IMR-90 (cell line): ENCODE measurements at regions of chr1 and their contacts with region 1.

Region 1: DNA sequence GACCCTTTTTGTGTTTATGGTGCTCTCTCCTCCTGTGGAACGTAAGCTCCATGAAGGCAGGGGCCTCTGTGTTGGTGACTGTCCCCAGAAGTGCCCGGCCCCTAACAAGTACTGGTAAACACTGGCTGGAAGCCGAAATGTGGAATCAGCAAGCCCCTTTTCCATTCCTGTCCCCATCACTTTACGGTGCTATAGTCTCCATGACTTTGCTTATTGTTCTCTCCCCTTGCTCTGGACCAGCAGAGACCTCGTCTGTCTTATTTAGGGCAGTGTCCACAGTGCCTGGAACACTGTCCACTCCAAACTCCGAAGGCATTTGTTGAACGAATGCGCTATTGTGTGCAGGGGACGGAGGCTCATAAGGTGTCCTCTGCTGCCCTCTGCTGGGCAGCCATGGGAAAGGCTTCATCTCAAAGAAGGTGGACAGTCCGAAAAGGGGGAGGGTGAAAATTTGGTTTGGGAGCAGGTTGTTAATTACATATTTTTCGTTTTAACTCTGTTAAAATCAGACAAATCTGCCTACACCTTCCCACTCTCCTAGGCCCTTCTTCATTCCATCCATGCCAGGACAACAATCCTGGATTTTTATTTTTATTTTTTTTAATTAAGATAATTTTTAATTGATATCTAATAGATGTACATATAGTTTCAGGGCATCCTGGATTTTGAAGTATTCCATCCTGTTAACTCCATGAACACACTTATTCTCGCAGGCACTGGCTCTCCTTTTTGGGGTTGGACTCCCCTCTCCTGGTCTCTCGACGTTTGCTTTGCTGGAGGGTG is 115.6 kb downstream of the PGBD5 start:
- DNase-seq: peak; percentile 68
- ATAC-seq: peak; percentile 98
- H3K4me3 ChIP-seq: no peak overlapping the region
- H3K27ac ChIP-seq: no peak overlapping the region
- H3K4me1 ChIP-seq: no peaks in the 10 kb centered on the region
- H3K27me3 ChIP-seq: peaks cover 2% of the 10 kb centered on the region
- CTCF ChIP-seq: peak; percentile 92
- POLR2A ChIP-seq: peak; percentile 44
- RAD21 ChIP-seq: peak; percentile 96

Region 2: DNA sequence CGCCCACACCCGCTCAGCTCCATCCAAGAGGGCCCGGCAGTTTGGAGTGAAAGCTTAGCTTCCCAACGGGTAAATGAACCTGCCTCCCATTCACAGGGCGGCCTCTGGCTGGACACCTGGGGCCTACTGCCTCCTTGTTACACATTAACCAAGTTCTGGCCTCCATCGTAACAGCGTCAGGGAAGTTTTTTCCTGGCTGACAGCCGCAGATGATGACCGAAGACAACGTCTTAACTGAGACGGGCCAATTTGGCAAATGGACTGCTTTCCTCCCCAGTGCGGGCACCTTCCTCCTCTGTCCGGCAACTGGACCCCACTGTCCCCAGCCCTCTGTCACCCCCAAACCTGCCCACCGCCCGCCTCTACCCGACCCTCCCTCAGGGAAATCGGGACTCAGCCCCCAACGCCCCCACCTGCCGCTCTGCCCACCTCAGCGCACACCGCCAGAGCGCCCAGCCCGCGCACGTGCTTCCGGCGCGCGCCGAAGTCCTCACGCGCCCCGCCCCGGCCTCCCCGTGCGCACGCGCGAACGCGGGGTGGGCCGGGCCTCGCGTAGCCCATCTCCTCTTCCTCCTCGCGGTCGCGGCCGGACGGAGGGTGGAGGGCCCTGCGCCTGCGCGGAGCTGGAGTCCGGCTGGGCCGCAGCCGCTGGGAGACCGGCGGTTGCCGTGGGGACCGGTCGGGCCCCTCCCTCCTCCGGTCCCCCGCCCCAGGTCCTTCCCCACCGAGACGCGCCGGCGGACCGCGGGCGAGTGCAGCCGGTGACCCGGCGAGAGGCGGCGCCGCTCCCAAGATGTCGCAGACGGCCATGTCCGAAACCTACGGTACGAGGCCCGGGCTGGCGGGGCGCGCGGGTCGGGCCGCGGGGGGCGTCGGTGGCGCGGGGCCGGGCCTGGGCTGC is 1039.8 kb before region 1 on chr1 and contains the start of gene RAB4A:
- CTCF ChIA-PET with region 1: no interaction called
- POLR2A ChIA-PET with region 1: no interaction called
- dilution Hi-C with region 1: no loop called
- in situ Hi-C with region 1: loop called (anchors 25 kb)
- intact Hi-C with region 1: no loop called
- DNase-seq: peak; percentile 81
- ATAC-seq: peak; percentile 96
- H3K4me3 ChIP-seq: peak within 1 kb of the TSS; percentile 87
- H3K27ac ChIP-seq: peak within 1 kb of the TSS; percentile 54
- H3K4me1 ChIP-seq: peaks cover 10% of the 10 kb centered on the region
- H3K27me3 ChIP-seq: no peaks in the 10 kb centered on the region
- CTCF ChIP-seq: no peak
- POLR2A ChIP-seq: peak; percentile 68; the same call in 1 of the 2 replicates
- RAD21 ChIP-seq: no peak
- total RNA-seq, gene RAB4A: 26.2 and 33.3 TPM in 2 replicates

Region 3: DNA sequence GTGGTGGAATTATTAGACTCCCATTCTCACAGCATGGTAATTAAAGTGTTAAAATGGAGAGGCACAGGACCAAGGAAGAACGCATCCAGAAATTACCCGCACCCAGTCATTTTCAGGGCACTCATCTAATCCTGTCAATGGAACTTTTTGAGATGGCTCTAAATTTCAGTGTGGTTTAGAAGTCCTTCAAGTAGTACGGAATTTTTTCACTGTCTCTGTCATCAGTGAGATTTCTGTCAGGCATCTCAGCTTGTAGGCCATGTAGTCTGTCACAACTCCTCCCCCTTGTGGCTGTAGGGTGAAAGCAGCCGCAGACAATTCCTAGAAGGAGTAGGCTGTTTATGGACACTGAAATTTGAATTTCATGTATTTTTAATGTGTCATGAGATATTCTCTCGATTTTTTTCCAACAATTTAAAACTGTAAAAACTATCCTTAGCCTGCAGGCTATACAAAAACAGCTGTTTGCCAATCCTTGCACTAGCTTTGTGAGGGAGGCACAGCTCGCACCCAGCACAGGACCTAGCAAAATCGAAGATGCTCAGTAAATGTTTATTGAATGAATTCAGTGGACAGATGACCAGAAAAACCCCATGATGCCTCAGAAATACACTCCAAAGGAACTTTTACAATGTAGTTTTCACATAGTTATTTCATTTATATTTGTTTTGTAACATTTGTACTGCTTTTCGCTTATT is 795.8 kb before region 1 on chr1:
- CTCF ChIA-PET with region 1: no interaction called
- POLR2A ChIA-PET with region 1: no interaction called
- dilution Hi-C with region 1: no loop called
- in situ Hi-C with region 1: no loop called
- intact Hi-C with region 1: loop called (anchors 1 kb)
- DNase-seq: peak; percentile 78
- ATAC-seq: peak; percentile 98
- H3K4me3 ChIP-seq: no peak overlapping the region
- H3K27ac ChIP-seq: no peak overlapping the region
- H3K4me1 ChIP-seq: no peaks in the 10 kb centered on the region; the same call in 1 of the 2 replicates
- H3K27me3 ChIP-seq: no peaks in the 10 kb centered on the region
- CTCF ChIP-seq: peak; percentile 82
- POLR2A ChIP-seq: no peak
- RAD21 ChIP-seq: peak; percentile 61

Region 4: DNA sequence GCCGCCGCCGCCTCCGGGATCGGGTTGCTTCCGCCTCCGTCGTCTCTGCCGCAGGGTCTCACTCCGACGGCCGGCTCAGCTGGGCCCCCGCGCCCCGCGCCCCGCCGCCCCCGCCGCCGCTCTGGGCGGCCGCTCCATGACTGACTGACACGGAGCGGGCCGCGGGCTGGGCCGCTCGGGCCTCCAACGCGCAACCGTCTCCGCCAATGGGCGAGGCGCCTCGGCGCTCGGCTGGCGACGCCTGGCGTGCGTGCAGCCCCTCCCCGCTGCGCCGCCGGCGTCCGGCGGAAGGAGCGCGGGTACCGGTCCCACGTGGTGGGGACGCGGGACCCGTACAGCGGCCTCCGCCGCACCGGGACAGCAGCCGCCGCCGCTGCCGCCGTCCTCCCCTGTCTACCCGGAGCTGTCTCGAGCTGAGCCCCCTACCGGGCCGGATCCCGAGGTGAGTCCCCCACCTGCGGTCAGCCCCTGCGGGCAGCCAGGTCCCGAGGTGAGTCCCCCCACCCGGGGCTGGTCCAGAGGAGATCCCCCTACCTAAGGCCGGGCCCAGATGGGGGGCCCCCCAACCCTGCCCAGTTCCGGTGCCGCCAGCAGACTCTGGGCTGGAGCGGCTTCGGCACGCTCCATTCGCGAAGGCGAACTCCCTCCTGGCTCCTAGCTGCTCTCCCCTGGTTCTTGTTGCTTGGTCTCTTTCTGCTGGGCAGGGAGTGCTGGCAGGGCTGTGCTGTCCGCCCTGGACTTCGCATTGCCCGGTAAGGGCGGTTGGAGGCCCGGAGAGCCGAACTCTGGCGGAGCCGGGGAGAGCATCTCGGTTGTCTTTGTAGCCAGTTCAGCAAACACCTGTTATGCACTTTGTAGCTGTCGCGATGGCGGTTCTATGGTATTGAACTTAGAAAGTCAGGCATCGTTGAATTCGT is 684.4 kb before region 1 on chr1 and contains the starts of genes TAF5L and URB2:
- CTCF ChIA-PET with region 1: no interaction called
- POLR2A ChIA-PET with region 1: no interaction called
- dilution Hi-C with region 1: no loop called
- in situ Hi-C with region 1: no loop called
- intact Hi-C with region 1: loop called (anchors 1 kb)
- DNase-seq: peak; percentile 89
- ATAC-seq: peak; percentile 95
- H3K4me3 ChIP-seq: peak within 1 kb of the TSS; percentile 84
- H3K27ac ChIP-seq: peak within 1 kb of the TSS; percentile 70
- H3K4me1 ChIP-seq: peaks cover 6% of the 10 kb centered on the region
- H3K27me3 ChIP-seq: no peaks in the 10 kb centered on the region
- CTCF ChIP-seq: no peak
- POLR2A ChIP-seq: peak; percentile 67; the same call in 1 of the 2 replicates
- RAD21 ChIP-seq: no peak
- total RNA-seq, gene TAF5L: 15.8 and 17.9 TPM in 2 replicates
- total RNA-seq, gene URB2: 12.8 and 15.4 TPM in 2 replicates

Region 5: GRCh38 chr1:229661022-229661877 is 649.3 kb before region 1 on chr1:
- CTCF ChIA-PET with region 1: interaction called, 3 read pairs
- POLR2A ChIA-PET with region 1: no interaction called
- dilution Hi-C with region 1: no loop called
- in situ Hi-C with region 1: loop called (anchors 10 kb)
- intact Hi-C with region 1: loop called (anchors 1 kb)
- DNase-seq: peak; percentile 65
- ATAC-seq: peak; percentile 92
- H3K4me3 ChIP-seq: no peak overlapping the region
- H3K27ac ChIP-seq: no peak overlapping the region
- H3K4me1 ChIP-seq: peaks cover 6% of the 10 kb centered on the region
- H3K27me3 ChIP-seq: no peaks in the 10 kb centered on the region
- CTCF ChIP-seq: peak; percentile 84
- POLR2A ChIP-seq: no peak
- RAD21 ChIP-seq: peak; percentile 85

Region 6: DNA sequence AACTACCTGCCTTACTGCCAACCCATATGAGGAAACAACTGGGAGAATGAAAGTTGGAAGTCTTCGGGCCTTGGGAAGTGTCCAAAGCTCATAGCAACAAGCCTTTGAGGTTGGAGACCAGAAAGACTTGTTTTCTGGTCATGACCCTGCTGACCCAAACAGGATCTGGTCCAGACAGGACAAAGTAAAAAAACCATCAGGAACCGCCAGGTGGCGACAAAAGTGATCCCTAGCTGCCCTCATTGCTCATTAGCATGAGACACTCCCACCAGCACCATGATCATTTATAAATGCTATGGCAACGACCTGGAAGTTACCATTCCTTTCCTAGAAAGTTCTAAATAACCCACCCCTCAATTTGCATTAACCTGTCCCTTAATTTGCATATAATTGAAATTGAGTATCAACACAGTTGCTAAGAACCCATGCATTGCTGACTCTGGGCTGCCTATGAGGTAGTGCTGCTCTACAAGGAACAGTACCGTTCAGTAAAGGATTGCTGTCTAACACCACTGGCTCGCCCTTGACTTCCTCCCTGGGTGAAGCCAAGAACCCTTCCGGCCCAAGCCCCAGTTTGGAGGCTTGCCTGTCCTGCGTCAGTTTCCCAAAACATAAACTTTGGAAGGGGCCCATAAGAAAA is 595.5 kb before region 1 on chr1:
- CTCF ChIA-PET with region 1: no interaction called
- POLR2A ChIA-PET with region 1: no interaction called
- dilution Hi-C with region 1: no loop called
- in situ Hi-C with region 1: no loop called
- intact Hi-C with region 1: loop called (anchors 2 kb)
- DNase-seq: peak; percentile 18
- ATAC-seq: no peak; the same call in 1 of the 2 replicates
- H3K4me3 ChIP-seq: no peak overlapping the region
- H3K27ac ChIP-seq: no peak overlapping the region
- H3K4me1 ChIP-seq: no peaks in the 10 kb centered on the region
- H3K27me3 ChIP-seq: no peaks in the 10 kb centered on the region; the same call in 1 of the 2 replicates
- CTCF ChIP-seq: peak; percentile 41
- POLR2A ChIP-seq: no peak
- RAD21 ChIP-seq: peak; percentile 37

Region 7: DNA sequence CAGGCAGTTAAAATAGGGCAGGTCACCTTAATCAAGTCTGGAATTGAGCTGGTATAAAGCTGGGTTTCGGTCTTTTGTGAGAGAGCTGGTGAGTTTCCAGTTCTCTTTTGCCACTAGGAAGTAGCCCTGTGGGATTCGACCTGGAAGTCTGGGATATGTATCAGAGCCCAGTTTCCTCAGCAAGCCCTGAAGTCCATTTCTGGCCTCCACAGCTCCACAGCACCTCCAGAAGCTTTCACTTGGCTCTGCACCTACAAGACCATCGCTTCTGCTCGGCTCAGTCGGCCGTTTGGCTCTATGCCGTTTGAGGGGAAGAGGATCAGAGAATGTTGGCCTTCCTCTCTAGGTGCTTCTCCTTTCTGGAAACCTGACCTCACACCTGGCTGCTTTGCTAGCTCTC is 95.5 kb before region 1 on chr1:
- CTCF ChIA-PET with region 1: no interaction called
- POLR2A ChIA-PET with region 1: no interaction called
- dilution Hi-C with region 1: no loop called
- in situ Hi-C with region 1: no loop called
- intact Hi-C with region 1: no loop called
- DNase-seq: peak; percentile 64
- ATAC-seq: peak; percentile 48
- H3K4me3 ChIP-seq: no peak overlapping the region
- H3K27ac ChIP-seq: no peak overlapping the region
- H3K4me1 ChIP-seq: peaks cover 9% of the 10 kb centered on the region
- H3K27me3 ChIP-seq: no peaks in the 10 kb centered on the region
- CTCF ChIP-seq: peak; percentile 51
- POLR2A ChIP-seq: no peak
- RAD21 ChIP-seq: peak; percentile 64

Region 8: GRCh38 chr1:230321741-230322432 is 11.3 kb after region 1 on chr1:
- CTCF ChIA-PET with region 1: no interaction called
- POLR2A ChIA-PET with region 1: no interaction called
- dilution Hi-C with region 1: no loop called
- in situ Hi-C with region 1: no loop called
- intact Hi-C with region 1: no loop called
- DNase-seq: no peak
- ATAC-seq: no peak
- H3K4me3 ChIP-seq: no peak overlapping the region
- H3K27ac ChIP-seq: no peak overlapping the region
- H3K4me1 ChIP-seq: no peaks in the 10 kb centered on the region
- H3K27me3 ChIP-seq: no peaks in the 10 kb centered on the region; the same call in 1 of the 2 replicates
- CTCF ChIP-seq: no peak
- POLR2A ChIP-seq: no peak
- RAD21 ChIP-seq: no peak

Region 9: DNA sequence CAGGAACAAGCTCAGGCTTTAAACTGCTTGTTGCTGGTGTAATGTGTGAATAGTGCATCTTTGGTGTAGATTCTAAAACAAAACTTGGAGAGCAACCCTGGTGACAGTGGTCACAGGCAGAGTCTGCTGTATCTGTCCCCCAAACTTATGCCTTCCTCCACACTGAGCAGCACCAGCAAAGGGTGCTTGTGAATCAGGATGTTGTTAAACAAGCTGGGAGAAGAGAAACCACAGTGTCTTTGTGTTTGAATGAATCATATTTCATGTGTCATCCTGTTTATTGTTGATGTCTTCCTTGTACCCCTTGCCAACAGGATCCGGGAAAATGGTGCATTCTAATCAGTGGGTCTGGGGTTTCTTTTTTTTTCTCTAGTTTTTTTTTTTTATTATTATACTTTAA is 239.9 kb after region 1 on chr1:
- CTCF ChIA-PET with region 1: no interaction called
- POLR2A ChIA-PET with region 1: no interaction called
- dilution Hi-C with region 1: no loop called
- in situ Hi-C with region 1: no loop called
- intact Hi-C with region 1: no loop called
- DNase-seq: no peak
- ATAC-seq: no peak
- H3K4me3 ChIP-seq: no peak overlapping the region
- H3K27ac ChIP-seq: no peak overlapping the region
- H3K4me1 ChIP-seq: no peaks in the 10 kb centered on the region
- H3K27me3 ChIP-seq: no peaks in the 10 kb centered on the region
- CTCF ChIP-seq: no peak
- POLR2A ChIP-seq: no peak
- RAD21 ChIP-seq: no peak

Region 10: GRCh38 chr1:230772457-230773395 is 462.2 kb after region 1 on chr1:
- CTCF ChIA-PET with region 1: no interaction called
- POLR2A ChIA-PET with region 1: no interaction called
- dilution Hi-C with region 1: no loop called
- in situ Hi-C with region 1: no loop called
- intact Hi-C with region 1: loop called (anchors 2 kb)
- DNase-seq: peak; percentile 59
- ATAC-seq: peak; percentile 74
- H3K4me3 ChIP-seq: no peak overlapping the region
- H3K27ac ChIP-seq: peak overlapping the region; percentile 63; the same call in 1 of the 2 replicates
- H3K4me1 ChIP-seq: peaks cover 13% of the 10 kb centered on the region
- H3K27me3 ChIP-seq: peaks cover 2% of the 10 kb centered on the region; the same call in 1 of the 2 replicates
- CTCF ChIP-seq: peak; percentile 63
- POLR2A ChIP-seq: no peak
- RAD21 ChIP-seq: peak; percentile 65